ENCODE measurements at regions of chrX and their contacts with region 1.

Region 1: DNA sequence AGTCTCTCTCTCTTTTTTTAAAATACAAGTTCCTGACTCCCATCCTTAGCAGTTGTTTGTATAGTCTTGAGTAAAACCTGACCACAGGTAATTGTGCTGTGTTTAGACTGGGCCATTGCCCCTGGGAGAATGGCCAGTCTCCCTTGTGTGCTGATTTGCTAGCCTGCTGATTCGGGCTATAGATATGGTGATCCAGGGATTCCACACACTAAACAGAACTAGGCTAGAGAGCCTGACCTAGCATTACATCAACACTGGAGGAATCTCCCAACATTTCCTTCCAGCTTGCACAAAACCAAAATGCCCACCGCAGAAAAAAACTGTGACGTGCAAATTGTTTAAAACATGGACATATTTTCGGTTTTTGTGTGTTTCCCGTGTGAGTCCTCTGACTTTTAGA is 5.1 kb downstream of the UPRT start:
- DNase-seq: no peak
- ATAC-seq: no peak
- H3K4me3 ChIP-seq: no peak overlapping the region
- H3K27ac ChIP-seq: no peak overlapping the region
- H3K4me1 ChIP-seq: peaks cover 8% of the 10 kb centered on the region; the same call in 1 of the 2 replicates
- H3K27me3 ChIP-seq: no peaks in the 10 kb centered on the region; a peak in 1 of 5 replicates
- CTCF ChIP-seq: no peak
- EP300 ChIP-seq: no peak
- POLR2A ChIP-seq: no peak
- RAD21 ChIP-seq: no peak

Region 2: GRCh38 chrX:75303795-75304194 is 24.8 kb after region 1 on chrX:
- CTCF ChIA-PET with region 1: no interaction called
- POLR2A ChIA-PET with region 1: no interaction called
- in situ Hi-C with region 1: no loop called
- intact Hi-C with region 1: no loop called
- DNase-seq: no peak
- ATAC-seq: no peak
- H3K4me3 ChIP-seq: no peak overlapping the region
- H3K27ac ChIP-seq: no peak overlapping the region
- H3K4me1 ChIP-seq: no peaks in the 10 kb centered on the region
- H3K27me3 ChIP-seq: no peaks in the 10 kb centered on the region
- CTCF ChIP-seq: no peak
- EP300 ChIP-seq: no peak
- POLR2A ChIP-seq: no peak
- RAD21 ChIP-seq: no peak

Region 3: DNA sequence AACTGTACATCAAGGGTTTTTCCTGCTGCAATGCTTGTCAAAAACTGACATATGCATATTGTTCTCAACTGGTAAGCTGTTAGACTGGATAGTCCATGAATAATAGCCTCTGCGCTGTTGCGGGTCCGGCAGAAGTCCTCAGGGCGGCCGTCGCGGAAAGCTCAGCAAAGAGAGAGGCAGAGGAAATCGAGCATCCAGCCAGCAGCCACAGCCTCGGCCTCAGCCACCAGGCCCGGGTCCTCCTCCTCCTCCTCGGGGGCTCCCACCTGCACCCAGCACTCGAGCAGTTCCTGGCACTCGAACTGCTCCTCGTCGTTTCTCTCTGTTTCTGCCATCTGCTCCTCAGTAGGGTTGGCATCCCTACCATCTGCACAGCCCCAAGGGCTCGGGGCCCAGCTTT is 48.6 kb after region 1 on chrX:
- CTCF ChIA-PET with region 1: no interaction called
- POLR2A ChIA-PET with region 1: no interaction called
- in situ Hi-C with region 1: no loop called
- intact Hi-C with region 1: loop called (anchors 5 kb)
- DNase-seq: no peak
- ATAC-seq: no peak
- H3K4me3 ChIP-seq: no peak overlapping the region
- H3K27ac ChIP-seq: no peak overlapping the region
- H3K4me1 ChIP-seq: no peaks in the 10 kb centered on the region
- H3K27me3 ChIP-seq: no peaks in the 10 kb centered on the region
- CTCF ChIP-seq: no peak
- EP300 ChIP-seq: no peak
- POLR2A ChIP-seq: no peak
- RAD21 ChIP-seq: no peak